MCF 10A (cell line): ENCODE measurements at regions of chr16 and their contacts with region 1.

Region 1: GRCh38 chr16:67546761-67547422 is 15.4 kb upstream of the CTCF start:
- DNase-seq: peak; percentile 75
- H3K4me3 Mint-ChIP-seq: no peak overlapping the region
- H3K27ac Mint-ChIP-seq: peak overlapping the region; percentile 86
- H3K4me1 Mint-ChIP-seq: peaks cover 38% of the 10 kb centered on the region
- H3K27me3 Mint-ChIP-seq: no peaks in the 10 kb centered on the region
- CTCF ChIP-seq: peak; percentile 89

Region 2: DNA sequence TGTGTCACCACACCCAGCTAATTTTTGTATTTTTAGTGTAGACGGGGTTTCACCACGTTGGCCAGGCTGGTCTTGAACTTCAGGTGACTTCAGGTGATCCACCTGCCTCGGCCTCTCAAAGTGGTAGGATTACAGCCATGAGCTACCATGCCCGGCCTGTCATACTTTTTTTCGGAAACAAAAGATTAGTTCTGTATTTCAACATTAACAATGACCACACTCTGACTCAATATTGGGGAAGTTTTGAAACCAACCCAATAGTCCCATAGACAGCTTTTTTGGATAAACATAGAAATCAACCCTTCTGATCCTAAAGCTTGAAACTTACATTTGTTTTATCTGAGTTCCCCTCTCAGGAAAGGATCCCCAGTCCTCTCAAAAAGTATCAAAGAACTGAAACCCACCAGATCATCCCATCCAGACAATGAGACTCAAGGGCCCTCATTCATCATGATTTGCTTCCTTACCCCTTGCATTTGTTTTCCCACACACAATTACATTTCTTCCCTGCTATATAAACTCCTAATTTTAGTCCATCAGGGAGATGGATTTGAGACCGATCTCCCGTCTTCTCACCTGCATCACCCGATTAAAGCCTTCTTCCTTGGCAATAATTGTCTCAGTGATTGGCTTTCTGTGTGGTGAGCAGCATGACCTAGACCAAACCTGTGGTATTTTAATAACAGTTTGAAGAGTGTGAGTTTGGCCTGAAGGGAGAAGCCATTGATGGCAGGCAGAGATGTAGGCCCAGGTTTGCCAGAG is 56.4 kb before region 1 on chr16:
- CTCF ChIA-PET with region 1: interaction called, 10 read pairs
- POLR2A ChIA-PET with region 1: no interaction called
- intact Hi-C with region 1: no loop called
- DNase-seq: peak; percentile 36
- H3K4me3 Mint-ChIP-seq: no peak overlapping the region
- H3K27ac Mint-ChIP-seq: no peak overlapping the region
- H3K4me1 Mint-ChIP-seq: no peaks in the 10 kb centered on the region
- H3K27me3 Mint-ChIP-seq: no peaks in the 10 kb centered on the region
- CTCF ChIP-seq: no peak

Region 3: GRCh38 chr16:67530013-67530939 is 16.6 kb before region 1 on chr16:
- CTCF ChIA-PET with region 1: interaction called, 60 read pairs
- POLR2A ChIA-PET with region 1: interaction called, 12 read pairs
- intact Hi-C with region 1: no loop called
- DNase-seq: peak; percentile 34
- H3K4me3 Mint-ChIP-seq: peak overlapping the region; percentile 82
- H3K27ac Mint-ChIP-seq: peak overlapping the region; percentile 88
- H3K4me1 Mint-ChIP-seq: peaks cover 33% of the 10 kb centered on the region
- H3K27me3 Mint-ChIP-seq: no peaks in the 10 kb centered on the region
- CTCF ChIP-seq: no peak

Region 4: DNA sequence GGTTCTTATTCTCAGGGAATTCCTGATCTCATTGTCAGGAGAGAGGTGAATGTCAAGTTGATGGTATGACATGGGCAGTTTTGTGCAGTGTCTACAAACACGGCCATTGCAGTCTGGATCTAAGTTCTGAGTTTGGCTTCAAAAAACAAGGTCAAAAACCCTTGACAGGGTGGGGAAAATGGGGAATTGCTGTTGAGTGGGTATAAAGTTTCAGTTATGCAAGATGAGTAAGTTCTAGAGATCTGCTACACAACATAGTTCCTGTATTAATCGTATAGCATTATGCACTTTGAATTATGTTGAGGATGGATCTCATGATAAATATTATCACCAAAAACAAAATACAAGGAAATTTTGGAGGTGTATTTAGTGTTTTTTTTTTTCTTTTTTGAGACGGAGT is 61.5 kb after region 1 on chr16:
- CTCF ChIA-PET with region 1: no interaction called
- POLR2A ChIA-PET with region 1: no interaction called
- intact Hi-C with region 1: no loop called
- DNase-seq: no peak
- H3K4me3 Mint-ChIP-seq: no peak overlapping the region
- H3K27ac Mint-ChIP-seq: no peak overlapping the region
- H3K4me1 Mint-ChIP-seq: no peaks in the 10 kb centered on the region
- H3K27me3 Mint-ChIP-seq: no peaks in the 10 kb centered on the region
- CTCF ChIP-seq: no peak

Region 5: DNA sequence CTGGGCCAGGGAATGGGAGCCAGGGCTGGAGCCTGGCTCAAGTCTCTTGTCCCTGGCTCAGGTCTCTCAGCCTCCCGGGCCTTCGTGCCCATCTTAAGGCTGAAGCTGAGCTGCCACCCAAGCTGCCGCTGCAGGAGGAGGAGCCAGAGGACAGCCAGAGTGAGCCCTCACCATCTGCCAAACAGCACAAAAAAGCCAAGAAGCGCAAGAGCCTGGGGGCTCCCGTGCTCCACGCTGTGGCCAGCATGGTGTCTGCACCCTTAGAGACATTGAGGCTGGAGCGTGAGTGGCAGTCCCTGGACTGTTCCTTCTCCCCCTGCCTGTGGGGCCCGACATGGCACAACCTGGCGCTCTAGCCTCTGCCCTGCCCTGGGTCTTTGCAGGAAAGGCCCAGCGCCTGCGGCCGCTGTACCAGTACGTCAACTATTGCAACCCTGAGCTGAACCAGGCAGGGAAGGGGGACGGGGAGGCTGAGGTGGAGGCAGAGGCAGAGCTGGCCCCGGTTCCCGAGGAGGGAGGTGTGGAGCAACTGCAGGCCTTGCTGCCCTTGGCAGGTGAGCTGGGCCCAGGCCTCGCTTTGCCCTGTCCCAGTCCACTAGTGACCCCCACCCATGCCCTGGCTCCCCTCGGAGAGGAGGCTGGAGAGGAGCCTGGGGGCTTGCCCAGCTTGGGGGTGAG is 121.1 kb after region 1 on chr16:
- CTCF ChIA-PET with region 1: interaction called, 18 read pairs
- POLR2A ChIA-PET with region 1: no interaction called
- intact Hi-C with region 1: no loop called
- DNase-seq: peak; percentile 82
- H3K4me3 Mint-ChIP-seq: no peak overlapping the region
- H3K27ac Mint-ChIP-seq: no peak overlapping the region
- H3K4me1 Mint-ChIP-seq: peaks cover 7% of the 10 kb centered on the region
- H3K27me3 Mint-ChIP-seq: no peaks in the 10 kb centered on the region
- CTCF ChIP-seq: peak; percentile 63